Left lung (tissue), 14 donors: ENCODE measurements at regions of chr15 and their contacts with region 1.

Region 1: DNA sequence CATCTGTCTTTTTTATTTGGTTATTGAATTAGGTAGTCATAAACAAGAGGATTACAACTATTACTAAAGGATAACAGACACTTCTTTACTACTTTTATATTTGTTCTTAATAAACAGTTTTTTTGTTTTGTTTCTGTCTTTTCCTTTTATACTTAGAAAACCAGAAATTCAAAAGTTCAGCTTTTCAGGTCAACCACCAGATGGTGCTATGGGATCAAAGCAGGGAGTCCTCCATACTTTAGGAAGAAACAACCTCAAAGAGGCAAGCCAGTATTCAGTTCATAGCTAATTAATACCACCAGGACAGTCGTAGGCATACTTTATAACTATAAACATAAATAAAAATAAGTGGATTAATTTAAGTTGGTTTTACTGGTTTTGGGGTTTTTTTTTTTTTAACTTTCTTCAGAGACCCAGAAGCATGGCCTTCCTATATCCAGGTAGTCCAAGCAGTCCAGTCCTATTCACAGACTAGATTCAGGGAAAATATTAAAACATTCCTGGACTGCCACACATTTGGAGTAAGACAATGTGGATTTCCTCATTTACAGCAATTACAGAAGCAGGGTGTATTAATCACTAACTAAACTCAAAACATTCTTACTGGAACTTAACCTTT is 16.0 kb upstream of the EID1 start:
- DNase-seq: peak in 2 of 4 donors; percentile 37 to 80
- ATAC-seq: peak; percentile 88
- H3K4me3 ChIP-seq: no peak overlapping the region
- H3K27ac ChIP-seq: peak overlapping the region in 1 of 2 donors; percentile 8
- H3K4me1 ChIP-seq: no peaks in the 10 kb centered on the region
- H3K27me3 ChIP-seq: no peaks in the 10 kb centered on the region
- CTCF ChIP-seq: peak; percentile 54 to 76

Region 2: GRCh38 chr15:48481802-48482201 is 380.1 kb before region 1 on chr15:
- intact Hi-C with region 1: no loop called
- DNase-seq: no peak
- ATAC-seq: no peak
- H3K4me3 ChIP-seq: no peak overlapping the region
- H3K27ac ChIP-seq: no peak overlapping the region
- H3K4me1 ChIP-seq: peaks cover 0 to 7% of the 10 kb centered on the region in 2 donors
- H3K27me3 ChIP-seq: no peaks in the 10 kb centered on the region
- CTCF ChIP-seq: no peak

Region 3: GRCh38 chr15:48925714-48926223 is 63.8 kb after region 1 on chr15:
- intact Hi-C with region 1: no loop called
- DNase-seq: no peak
- ATAC-seq: no peak
- H3K4me3 ChIP-seq: no peak overlapping the region
- H3K27ac ChIP-seq: no peak overlapping the region
- H3K4me1 ChIP-seq: no peaks in the 10 kb centered on the region
- H3K27me3 ChIP-seq: peaks cover 0 to 8% of the 10 kb centered on the region in 2 donors
- CTCF ChIP-seq: no peak

Region 4: GRCh38 chr15:49145651-49146609 is 284.0 kb after region 1 on chr15:
- intact Hi-C with region 1: loop called in 1 of 2 experiments (anchors 10 kb)
- DNase-seq: peak in 1 of 4 donors; percentile 54
- ATAC-seq: peak; percentile 86
- H3K4me3 ChIP-seq: no peak overlapping the region
- H3K27ac ChIP-seq: no peak overlapping the region
- H3K4me1 ChIP-seq: peaks cover 0 to 49% of the 10 kb centered on the region in 2 donors
- H3K27me3 ChIP-seq: no peaks in the 10 kb centered on the region
- CTCF ChIP-seq: peak; percentile 45 to 55

Region 5: GRCh38 chr15:50145451-50145872 is 1283.5 kb after region 1 on chr15:
- intact Hi-C with region 1: loop called in 1 of 2 experiments (anchors 10 kb)
- DNase-seq: peak in 2 of 4 donors; percentile 57 to 71
- ATAC-seq: peak; percentile 93
- H3K4me3 ChIP-seq: no peak overlapping the region
- H3K27ac ChIP-seq: no peak overlapping the region
- H3K4me1 ChIP-seq: peaks cover 0 to 14% of the 10 kb centered on the region in 2 donors
- H3K27me3 ChIP-seq: no peaks in the 10 kb centered on the region
- CTCF ChIP-seq: peak; percentile 54 to 61